Ascending aorta (tissue), 2 donors: ENCODE measurements at regions of chr12 and their contacts with region 1.

Region 1: GRCh38 chr12:57941165-57941894 is at the start of gene ATP23:
- DNase-seq: peak; percentile 57 to 94
- H3K4me3 ChIP-seq: peak within 1 kb of the TSS; percentile 59 to 68
- H3K27ac ChIP-seq: peak within 1 kb of the TSS; percentile 79 to 80
- H3K4me1 ChIP-seq: peaks cover 0 to 12% of the 10 kb centered on the region in 2 donors
- H3K27me3 ChIP-seq: no peaks in the 10 kb centered on the region
- CTCF ChIP-seq: no peak
- total RNA-seq, gene ATP23: not detected

Region 2: GRCh38 chr12:57852620-57853500 is 88.5 kb before region 1 on chr12:
- intact Hi-C with region 1: no loop called
- DNase-seq: peak in 1 of 2 donors; percentile 82
- H3K4me3 ChIP-seq: peak overlapping the region; percentile 54 to 61
- H3K27ac ChIP-seq: peak overlapping the region; percentile 91 to 92
- H3K4me1 ChIP-seq: peaks cover 4 to 36% of the 10 kb centered on the region in 2 donors
- H3K27me3 ChIP-seq: no peaks in the 10 kb centered on the region
- CTCF ChIP-seq: peak in 2 of 3 experiments; percentile 18 to 37

Region 3: DNA sequence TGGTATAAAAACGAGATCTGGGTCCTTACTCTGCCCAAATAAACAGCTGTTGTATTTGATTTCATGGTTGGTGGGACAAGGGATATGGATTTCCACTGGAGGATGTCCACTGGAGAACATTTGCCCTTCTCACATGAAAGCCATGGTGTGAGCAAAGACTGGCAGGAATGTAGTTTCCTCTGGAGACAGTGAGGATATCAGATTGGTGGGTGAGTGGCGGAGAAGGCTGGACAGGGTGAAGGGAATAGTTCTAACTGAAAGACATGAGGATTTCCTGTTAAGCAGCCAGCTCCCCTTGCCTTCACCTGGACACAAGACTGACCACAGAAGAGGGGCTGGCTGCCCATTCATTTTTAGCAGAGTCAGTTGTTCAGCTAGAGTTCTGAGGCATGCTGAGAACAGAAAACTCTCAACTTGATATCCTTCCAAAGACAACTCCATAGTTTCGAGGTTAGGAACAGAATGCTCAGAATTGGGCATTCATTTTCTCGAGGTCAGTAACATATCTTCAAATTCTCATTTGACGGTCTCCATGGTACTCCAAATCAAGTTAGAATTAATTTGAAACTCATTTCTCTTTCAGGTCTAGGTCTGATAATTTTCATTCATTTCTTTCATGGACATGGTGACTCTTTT is 613.3 kb after region 1 on chr12:
- intact Hi-C with region 1: no loop called
- DNase-seq: no peak
- H3K4me3 ChIP-seq: no peak overlapping the region
- H3K27ac ChIP-seq: no peak overlapping the region
- H3K4me1 ChIP-seq: no peaks in the 10 kb centered on the region
- H3K27me3 ChIP-seq: no peaks in the 10 kb centered on the region
- CTCF ChIP-seq: no peak

Region 4: DNA sequence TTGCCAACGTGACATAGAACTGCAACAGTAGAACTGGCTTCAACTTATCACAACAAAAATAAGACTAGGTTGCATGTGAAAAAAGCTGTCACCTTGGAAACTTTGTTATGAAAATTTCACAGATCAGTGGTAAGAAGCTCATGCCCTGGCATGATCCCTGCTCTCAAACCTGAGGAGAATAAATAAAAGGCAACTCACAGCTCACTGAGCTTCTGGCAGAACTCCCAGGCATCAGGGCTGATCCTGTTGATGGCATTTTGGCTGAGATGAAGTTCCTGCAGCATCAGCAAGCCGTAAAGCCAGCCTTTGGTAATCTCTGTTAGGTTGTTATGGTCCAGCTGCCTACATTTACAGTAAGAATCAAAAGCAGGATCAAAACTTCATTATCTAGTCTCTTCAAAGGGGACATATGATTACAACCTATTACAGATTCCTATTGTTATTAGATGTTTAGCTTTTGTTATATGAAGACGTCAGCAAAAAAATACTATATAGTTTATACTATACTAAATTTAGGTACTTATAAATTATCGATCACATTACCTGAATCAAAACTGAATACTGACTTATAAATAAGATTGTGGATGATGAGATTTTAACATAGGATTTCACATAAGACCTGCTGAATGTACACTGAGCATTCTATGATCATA is 946.9 kb after region 1 on chr12:
- intact Hi-C with region 1: loop called (anchors 10 kb)
- DNase-seq: no peak
- H3K4me3 ChIP-seq: no peak overlapping the region
- H3K27ac ChIP-seq: no peak overlapping the region
- H3K4me1 ChIP-seq: peaks cover 3 to 20% of the 10 kb centered on the region in 2 donors
- H3K27me3 ChIP-seq: no peaks in the 10 kb centered on the region
- CTCF ChIP-seq: no peak